MCF 10A (cell line): ENCODE measurements at regions of chr3 and their contacts with region 1.

Region 1: GRCh38 chr3:143775459-143775858 is 72.8 kb downstream of the SLC9A9 start:
- DNase-seq: peak; percentile 45
- H3K4me3 Mint-ChIP-seq: no peak overlapping the region
- H3K27ac Mint-ChIP-seq: no peak overlapping the region
- H3K4me1 Mint-ChIP-seq: peaks cover 5% of the 10 kb centered on the region
- H3K27me3 Mint-ChIP-seq: no peaks in the 10 kb centered on the region
- CTCF ChIP-seq: peak; percentile 57

Region 2: GRCh38 chr3:144770915-144771351 is 995.5 kb after region 1 on chr3:
- CTCF ChIA-PET with region 1: no interaction called
- POLR2A ChIA-PET with region 1: no interaction called
- intact Hi-C with region 1: loop called (anchors 10 kb)
- DNase-seq: peak; percentile 38
- H3K4me3 Mint-ChIP-seq: no peak overlapping the region
- H3K27ac Mint-ChIP-seq: no peak overlapping the region
- H3K4me1 Mint-ChIP-seq: no peaks in the 10 kb centered on the region
- H3K27me3 Mint-ChIP-seq: no peaks in the 10 kb centered on the region
- CTCF ChIP-seq: peak; percentile 32